ENCODE measurements at regions of chr12 and their contacts with region 1.

Region 1: DNA sequence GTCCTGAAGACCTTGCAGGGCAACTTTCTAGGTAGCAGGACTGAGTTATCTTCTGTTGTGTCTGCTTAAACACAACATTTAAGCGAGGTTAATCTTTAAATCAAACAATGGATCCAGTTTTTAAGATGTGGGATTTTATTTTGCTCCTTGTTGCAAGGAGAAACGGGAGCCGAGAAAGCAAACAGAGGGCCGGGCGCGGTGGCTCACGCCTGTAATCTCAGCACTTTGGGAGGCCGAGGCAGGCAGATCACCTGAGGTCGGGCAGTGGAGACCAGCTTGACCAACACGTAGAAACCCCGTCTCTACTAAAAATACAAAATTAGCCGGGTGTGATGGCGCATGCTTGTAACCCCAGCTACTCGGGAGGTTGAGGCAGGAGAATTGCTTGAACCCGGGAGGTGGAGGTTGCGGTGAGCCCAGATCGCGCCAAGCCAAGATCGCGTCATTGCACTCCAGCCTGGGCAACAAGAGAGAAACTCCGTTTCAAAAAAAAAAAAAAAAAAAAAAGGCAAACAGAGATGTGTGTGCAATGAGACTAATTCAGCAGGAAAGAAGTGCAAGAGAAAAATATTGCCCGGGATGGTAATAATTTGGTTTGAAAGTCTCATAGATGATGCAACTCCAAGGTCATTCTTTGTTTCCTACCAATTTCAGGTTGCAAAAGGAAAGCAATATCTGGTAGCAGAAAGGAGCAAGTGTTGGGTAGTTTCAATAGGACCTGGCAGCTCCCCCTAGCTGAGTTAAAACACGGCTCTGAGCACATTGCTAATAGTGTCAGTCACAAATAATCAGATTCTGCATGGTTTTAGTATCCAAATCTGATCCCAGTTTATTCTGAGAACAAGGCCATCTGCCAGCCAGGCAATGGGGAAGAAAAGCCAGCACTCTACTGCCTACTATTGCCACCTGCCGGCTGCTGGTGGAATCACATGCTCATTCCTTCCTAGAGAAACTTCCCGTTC is 141.4 kb downstream of the PPM1H start:
- DNase-seq: peak; percentile 90
- ATAC-seq: peak; percentile 91
- H3K4me3 ChIP-seq: no peak overlapping the region
- H3K27ac ChIP-seq: peak overlapping the region; percentile 59
- H3K4me1 ChIP-seq: peaks cover 19% of the 10 kb centered on the region
- H3K27me3 ChIP-seq: no peaks in the 10 kb centered on the region
- CTCF ChIP-seq: peak; percentile 93

Region 2: DNA sequence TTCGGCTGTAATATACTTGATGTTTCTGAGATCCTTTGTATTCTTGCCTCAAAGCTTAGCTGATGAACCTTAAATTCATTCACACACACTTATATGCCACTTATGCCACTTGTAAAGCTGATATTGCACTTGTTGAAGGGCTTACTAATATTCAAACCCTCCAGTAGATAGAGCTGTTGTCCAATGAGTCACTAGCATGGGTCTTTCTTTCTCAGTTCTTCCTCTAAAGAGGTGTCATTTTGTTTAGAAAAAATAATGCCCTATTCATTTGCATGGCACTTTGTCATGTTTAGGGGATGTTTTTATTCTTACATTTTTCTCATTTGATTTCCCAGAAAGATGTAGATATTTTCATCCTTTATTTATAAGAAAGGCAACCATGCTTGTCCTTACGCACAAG is 270.6 kb before region 1 on chr12:
- CTCF ChIA-PET with region 1: interaction called, 4 read pairs
- POLR2A ChIA-PET with region 1: no interaction called
- intact Hi-C with region 1: loop called (anchors 5 kb)
- DNase-seq: peak; percentile 18
- ATAC-seq: peak; percentile 62
- H3K4me3 ChIP-seq: no peak overlapping the region
- H3K27ac ChIP-seq: no peak overlapping the region
- H3K4me1 ChIP-seq: no peaks in the 10 kb centered on the region
- H3K27me3 ChIP-seq: no peaks in the 10 kb centered on the region
- CTCF ChIP-seq: peak; percentile 43; the same call in 1 of the 2 replicates

Region 3: GRCh38 chr12:62581288-62582064 is 212.1 kb before region 1 on chr12:
- CTCF ChIA-PET with region 1: interaction called, 15 read pairs
- POLR2A ChIA-PET with region 1: no interaction called
- intact Hi-C with region 1: loop called (anchors 1 kb)
- DNase-seq: peak; percentile 65
- ATAC-seq: peak; percentile 89
- H3K4me3 ChIP-seq: no peak overlapping the region
- H3K27ac ChIP-seq: no peak overlapping the region
- H3K4me1 ChIP-seq: no peaks in the 10 kb centered on the region
- H3K27me3 ChIP-seq: no peaks in the 10 kb centered on the region
- CTCF ChIP-seq: peak; percentile 83

Region 4: GRCh38 chr12:62640910-62641448 is 152.6 kb before region 1 on chr12:
- CTCF ChIA-PET with region 1: no interaction called
- POLR2A ChIA-PET with region 1: no interaction called
- intact Hi-C with region 1: loop called (anchors 1 kb)
- DNase-seq: peak; percentile 27
- ATAC-seq: peak; percentile 67
- H3K4me3 ChIP-seq: no peak overlapping the region
- H3K27ac ChIP-seq: peak overlapping the region; percentile 68
- H3K4me1 ChIP-seq: peaks cover 16% of the 10 kb centered on the region
- H3K27me3 ChIP-seq: no peaks in the 10 kb centered on the region
- CTCF ChIP-seq: no peak

Region 5: DNA sequence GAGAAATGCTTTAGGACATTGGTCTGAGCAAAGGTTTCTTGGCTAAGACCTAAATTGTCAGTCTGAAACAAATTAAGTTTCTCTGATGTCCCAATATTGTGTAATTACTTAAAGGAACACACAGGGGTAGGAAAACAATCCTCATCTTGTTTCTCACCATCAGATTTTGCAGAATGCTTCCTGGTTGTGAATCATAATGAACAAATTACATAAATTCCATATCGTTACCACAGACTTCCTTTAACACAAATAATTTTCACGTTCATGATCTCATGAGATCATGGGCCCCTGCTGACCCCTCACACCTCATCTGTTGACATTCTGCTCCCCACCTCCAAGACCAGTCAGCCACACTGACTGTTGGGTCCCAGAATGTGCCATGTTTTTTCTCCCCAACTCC is 132.8 kb before region 1 on chr12:
- CTCF ChIA-PET with region 1: no interaction called
- POLR2A ChIA-PET with region 1: no interaction called
- intact Hi-C with region 1: loop called (anchors 2 kb)
- DNase-seq: peak; percentile 75
- ATAC-seq: peak; percentile 81
- H3K4me3 ChIP-seq: no peak overlapping the region
- H3K27ac ChIP-seq: peak overlapping the region; percentile 54
- H3K4me1 ChIP-seq: peaks cover 15% of the 10 kb centered on the region
- H3K27me3 ChIP-seq: no peaks in the 10 kb centered on the region
- CTCF ChIP-seq: no peak

Region 6: DNA sequence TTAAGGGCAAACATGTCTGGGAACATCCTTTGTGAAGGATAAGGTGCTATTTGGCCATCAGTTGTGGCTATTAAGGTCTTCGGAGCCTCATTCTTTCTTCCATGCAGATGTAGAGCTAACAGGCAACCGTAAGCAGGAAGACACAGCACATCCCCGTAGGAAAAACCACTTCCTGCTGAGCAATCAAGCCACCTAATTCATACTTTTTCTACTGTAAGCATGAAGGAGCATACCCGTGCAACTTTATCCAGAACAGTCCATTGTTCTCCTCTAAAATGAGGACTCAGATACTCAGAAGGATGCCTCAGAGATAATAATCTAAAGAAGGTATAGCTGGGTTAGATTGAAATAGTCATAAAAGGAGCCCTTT is 90.5 kb before region 1 on chr12:
- CTCF ChIA-PET with region 1: interaction called, 15 read pairs
- POLR2A ChIA-PET with region 1: no interaction called
- intact Hi-C with region 1: no loop called
- DNase-seq: peak; percentile 73
- ATAC-seq: peak; percentile 81
- H3K4me3 ChIP-seq: 0 out of 2 replicates have a peak overlapping the region, but pooled peaks have one; percentile 8
- H3K27ac ChIP-seq: peak overlapping the region; percentile 93
- H3K4me1 ChIP-seq: peaks cover 38% of the 10 kb centered on the region
- H3K27me3 ChIP-seq: no peaks in the 10 kb centered on the region
- CTCF ChIP-seq: no peak

Region 7: GRCh38 chr12:62760779-62761178 is 32.8 kb before region 1 on chr12:
- CTCF ChIA-PET with region 1: no interaction called
- POLR2A ChIA-PET with region 1: no interaction called
- intact Hi-C with region 1: no loop called
- DNase-seq: no peak
- ATAC-seq: peak; percentile 27
- H3K4me3 ChIP-seq: no peak overlapping the region
- H3K27ac ChIP-seq: no peak overlapping the region
- H3K4me1 ChIP-seq: peaks cover 25% of the 10 kb centered on the region
- H3K27me3 ChIP-seq: no peaks in the 10 kb centered on the region
- CTCF ChIP-seq: no peak

Measured in PC-3 (cell line).